ENCODE measurements at regions of chr2 and their contacts with region 1.

Region 1: GRCh38 chr2:223727562-223727961 is 109.8 kb downstream of the AP1S3 start:
- DNase-seq: peak; percentile 64
- ATAC-seq: peak; percentile 76
- H3K4me3 ChIP-seq: no peak overlapping the region
- H3K27ac ChIP-seq: no peak overlapping the region
- H3K4me1 ChIP-seq: peaks cover 35% of the 10 kb centered on the region
- H3K27me3 ChIP-seq: no peaks in the 10 kb centered on the region
- CTCF ChIP-seq: peak; percentile 75
- EP300 ChIP-seq: no peak
- POLR2A ChIP-seq: no peak
- RAD21 ChIP-seq: peak; percentile 37; the same call in 1 of the 2 replicates

Region 2: GRCh38 chr2:223598994-223599639 is 128.4 kb before region 1 on chr2:
- CTCF ChIA-PET with region 1: no interaction called
- POLR2A ChIA-PET with region 1: no interaction called
- in situ Hi-C with region 1: no loop called
- intact Hi-C with region 1: no loop called
- DNase-seq: no peak
- ATAC-seq: no peak
- H3K4me3 ChIP-seq: no peak overlapping the region
- H3K27ac ChIP-seq: no peak overlapping the region
- H3K4me1 ChIP-seq: no peaks in the 10 kb centered on the region
- H3K27me3 ChIP-seq: no peaks in the 10 kb centered on the region
- CTCF ChIP-seq: no peak
- EP300 ChIP-seq: no peak
- POLR2A ChIP-seq: no peak
- RAD21 ChIP-seq: no peak

Region 3: DNA sequence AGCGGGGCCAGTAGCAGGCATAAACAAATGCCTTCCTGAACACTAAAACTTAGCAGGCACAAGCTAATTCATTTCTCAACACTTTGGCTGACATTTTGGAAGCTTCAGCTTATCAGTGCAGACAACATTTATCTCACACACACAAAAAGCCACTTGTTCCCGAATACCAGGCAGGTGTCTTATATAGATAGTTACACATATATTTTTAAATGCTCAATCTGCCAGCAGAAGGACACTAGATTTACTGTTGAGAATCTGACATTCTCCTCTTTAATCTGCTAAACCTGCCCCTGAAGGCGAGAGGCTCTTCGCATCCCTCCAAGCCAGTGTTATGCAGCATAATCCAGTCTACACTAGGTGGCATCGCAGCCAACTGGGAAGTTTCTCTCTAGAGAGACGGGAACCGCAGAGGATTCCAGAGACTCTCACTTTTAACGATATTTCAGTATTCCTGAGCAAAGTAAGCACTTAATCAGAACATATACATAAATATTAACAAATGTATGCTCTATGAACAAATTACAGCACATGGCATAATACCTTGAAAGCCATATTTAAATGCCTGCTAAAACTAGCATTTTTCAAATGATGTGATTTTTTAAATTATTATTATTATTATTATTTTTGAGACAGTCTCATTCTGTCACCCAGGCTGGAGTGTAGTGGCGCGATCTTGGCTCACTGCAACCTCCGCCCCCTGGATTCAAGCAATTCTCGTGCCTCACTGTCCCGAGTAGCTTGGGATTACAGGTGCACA is 35.2 kb before region 1 on chr2:
- CTCF ChIA-PET with region 1: no interaction called
- POLR2A ChIA-PET with region 1: no interaction called
- in situ Hi-C with region 1: no loop called
- intact Hi-C with region 1: loop called (anchors 5 kb)
- DNase-seq: peak; percentile 54
- ATAC-seq: peak; percentile 95
- H3K4me3 ChIP-seq: no peak overlapping the region
- H3K27ac ChIP-seq: no peak overlapping the region
- H3K4me1 ChIP-seq: peaks cover 16% of the 10 kb centered on the region; the same call in 1 of the 2 replicates
- H3K27me3 ChIP-seq: peaks cover 0 to 6% of the 10 kb centered on the region in 2 experiments; a peak in 2 of 5 replicates
- CTCF ChIP-seq: peak; percentile 85
- EP300 ChIP-seq: no peak
- POLR2A ChIP-seq: no peak
- RAD21 ChIP-seq: peak; percentile 61; the same call in 1 of the 2 replicates

Region 4: GRCh38 chr2:223712642-223713041 is 14.9 kb before region 1 on chr2:
- CTCF ChIA-PET with region 1: no interaction called
- POLR2A ChIA-PET with region 1: no interaction called
- in situ Hi-C with region 1: no loop called
- intact Hi-C with region 1: no loop called
- DNase-seq: no peak
- ATAC-seq: no peak
- H3K4me3 ChIP-seq: no peak overlapping the region
- H3K27ac ChIP-seq: no peak overlapping the region
- H3K4me1 ChIP-seq: peaks cover 13% of the 10 kb centered on the region; the same call in 1 of the 2 replicates
- H3K27me3 ChIP-seq: no peaks in the 10 kb centered on the region
- CTCF ChIP-seq: no peak
- EP300 ChIP-seq: no peak
- POLR2A ChIP-seq: no peak
- RAD21 ChIP-seq: no peak

Region 5: DNA sequence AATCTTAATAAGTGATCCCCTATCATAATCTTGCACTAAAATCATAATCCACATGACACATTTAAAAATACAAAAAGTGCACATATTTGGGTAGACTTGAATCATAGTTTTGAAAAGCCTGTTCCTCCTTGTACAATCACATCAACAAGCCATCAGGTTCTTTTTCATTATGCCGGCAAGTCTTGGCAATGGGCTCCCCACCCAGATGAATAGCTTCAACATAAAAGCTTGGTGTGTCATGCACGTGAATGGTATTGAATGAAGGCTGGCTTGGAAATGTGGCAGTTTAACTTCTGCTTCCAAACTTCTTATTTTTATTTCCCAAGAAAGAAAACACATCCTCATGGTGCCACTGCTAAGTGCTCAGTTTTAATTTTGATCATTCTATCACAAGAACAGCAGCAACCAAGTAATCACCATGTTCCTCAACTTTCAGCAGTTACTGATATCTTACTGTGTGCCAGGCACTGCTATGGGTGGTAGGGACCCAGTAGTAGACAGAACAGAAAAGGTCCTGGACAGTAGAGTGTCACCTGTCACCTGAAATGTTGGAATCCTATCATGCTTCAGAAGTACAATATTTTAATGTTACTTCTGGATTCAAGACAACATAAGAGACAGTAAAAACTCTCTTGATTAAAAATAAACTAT is 20.0 kb after region 1 on chr2:
- CTCF ChIA-PET with region 1: no interaction called
- POLR2A ChIA-PET with region 1: no interaction called
- in situ Hi-C with region 1: no loop called
- intact Hi-C with region 1: no loop called
- DNase-seq: no peak
- ATAC-seq: no peak
- H3K4me3 ChIP-seq: no peak overlapping the region
- H3K27ac ChIP-seq: no peak overlapping the region
- H3K4me1 ChIP-seq: no peaks in the 10 kb centered on the region
- H3K27me3 ChIP-seq: no peaks in the 10 kb centered on the region
- CTCF ChIP-seq: no peak
- EP300 ChIP-seq: no peak
- POLR2A ChIP-seq: no peak
- RAD21 ChIP-seq: no peak

Region 6: DNA sequence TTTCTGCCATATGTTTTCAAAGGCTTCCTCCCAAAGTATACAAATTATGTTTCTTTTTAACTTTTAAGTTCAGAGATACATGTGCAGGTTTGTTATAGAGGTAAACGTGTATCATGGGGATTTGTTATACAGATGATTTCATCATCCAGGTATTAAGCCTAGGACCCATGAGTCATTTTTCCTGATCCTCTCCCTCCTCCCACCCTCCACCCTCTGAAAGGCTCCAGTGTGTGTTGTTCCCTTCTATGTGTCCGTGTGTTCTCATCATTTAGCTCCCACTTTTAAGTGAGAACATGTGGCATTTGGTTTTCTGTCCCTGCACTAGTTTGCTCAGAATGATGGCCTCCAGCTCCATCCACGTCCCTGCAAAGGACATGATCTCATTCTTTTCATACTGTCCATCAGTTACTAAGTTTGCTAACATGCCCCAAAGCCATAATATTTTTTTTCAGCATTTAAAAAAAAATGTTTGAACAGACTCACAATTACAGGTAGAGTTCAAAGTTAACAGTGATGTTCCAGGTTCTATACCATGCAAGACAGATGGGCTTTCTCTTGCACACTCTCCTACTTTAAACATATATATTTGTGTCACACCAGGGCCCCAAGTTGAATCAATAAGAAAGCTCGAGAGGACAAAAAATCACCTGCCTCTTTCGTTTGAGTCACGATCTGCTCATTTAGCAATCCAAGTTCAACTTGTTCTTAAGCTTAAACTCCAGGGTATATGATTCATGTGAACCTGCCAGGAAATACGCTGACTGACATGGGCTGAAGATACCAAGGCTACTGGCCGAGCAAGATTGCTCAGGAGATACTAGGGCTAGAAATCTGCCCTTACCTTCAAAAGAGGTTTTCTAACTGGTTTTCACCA is 32.2 kb after region 1 on chr2:
- CTCF ChIA-PET with region 1: no interaction called
- POLR2A ChIA-PET with region 1: interaction called, 4 read pairs
- in situ Hi-C with region 1: no loop called
- intact Hi-C with region 1: loop called (anchors 1 kb)
- DNase-seq: peak; percentile 81
- ATAC-seq: peak; percentile 67
- H3K4me3 ChIP-seq: peak overlapping the region in 1 of 3 experiments; percentile 1; a peak in 1 of 6 replicates
- H3K27ac ChIP-seq: peak overlapping the region; percentile 22
- H3K4me1 ChIP-seq: peaks cover 41% of the 10 kb centered on the region
- H3K27me3 ChIP-seq: no peaks in the 10 kb centered on the region
- CTCF ChIP-seq: no peak
- EP300 ChIP-seq: no peak
- POLR2A ChIP-seq: no peak
- RAD21 ChIP-seq: no peak

Measured in HepG2 (cell line).